ENCODE measurements at regions of chr14 and their contacts with region 1.

Region 1: GRCh38 chr14:70045844-70046535 is 142.8 kb downstream of the SLC8A3 start:
- DNase-seq: peak; percentile 73
- ATAC-seq: peak; percentile 91
- H3K4me3 ChIP-seq: peak overlapping the region in 2 of 3 experiments; percentile 15 to 61; a peak in 3 of 6 replicates
- H3K27ac ChIP-seq: peak overlapping the region; percentile 71
- H3K4me1 ChIP-seq: peaks cover 61% of the 10 kb centered on the region
- H3K27me3 ChIP-seq: no peaks in the 10 kb centered on the region
- CTCF ChIP-seq: peak; percentile 100
- EP300 ChIP-seq: no peak
- POLR2A ChIP-seq: no peak
- RAD21 ChIP-seq: peak; percentile 98

Region 2: DNA sequence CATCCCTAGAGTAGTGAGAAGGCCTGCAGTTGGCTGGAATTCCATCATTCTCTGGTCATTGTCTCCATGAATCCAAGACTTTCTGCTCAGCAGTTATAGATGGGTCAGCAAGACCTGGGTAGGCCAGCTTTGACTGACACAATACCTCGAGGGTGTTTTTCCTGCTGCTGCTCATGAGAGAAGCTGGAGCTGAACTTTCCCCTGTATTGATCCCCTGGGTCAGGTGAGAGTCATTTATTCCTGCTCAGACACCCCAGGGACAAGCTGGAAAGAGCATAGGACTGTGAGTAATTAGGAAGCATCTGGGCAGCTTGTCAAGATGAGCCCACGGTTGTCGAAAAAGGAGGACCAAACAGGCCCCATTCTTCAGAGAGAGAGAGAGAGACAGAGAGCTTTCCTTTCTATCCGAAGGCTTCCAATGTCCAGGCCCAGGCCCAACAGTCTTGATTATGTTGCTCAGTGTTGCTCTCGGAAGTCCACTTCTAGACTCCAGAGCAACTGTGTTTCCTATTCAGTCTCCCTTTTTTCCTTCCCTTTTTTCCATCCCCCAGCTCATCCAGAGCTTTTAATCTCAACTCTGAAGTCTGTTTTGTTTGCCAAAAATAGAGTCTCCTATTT is 11.6 kb after region 1 on chr14:
- CTCF ChIA-PET with region 1: no interaction called
- POLR2A ChIA-PET with region 1: interaction called, 12 read pairs
- in situ Hi-C with region 1: no loop called
- intact Hi-C with region 1: no loop called
- DNase-seq: no peak
- ATAC-seq: peak; percentile 88
- H3K4me3 ChIP-seq: no peak overlapping the region
- H3K27ac ChIP-seq: no peak overlapping the region
- H3K4me1 ChIP-seq: peaks cover 22% of the 10 kb centered on the region
- H3K27me3 ChIP-seq: peaks cover 0 to 5% of the 10 kb centered on the region in 2 experiments; a peak in 1 of 5 replicates
- CTCF ChIP-seq: no peak
- EP300 ChIP-seq: no peak
- POLR2A ChIP-seq: no peak
- RAD21 ChIP-seq: no peak

Region 3: DNA sequence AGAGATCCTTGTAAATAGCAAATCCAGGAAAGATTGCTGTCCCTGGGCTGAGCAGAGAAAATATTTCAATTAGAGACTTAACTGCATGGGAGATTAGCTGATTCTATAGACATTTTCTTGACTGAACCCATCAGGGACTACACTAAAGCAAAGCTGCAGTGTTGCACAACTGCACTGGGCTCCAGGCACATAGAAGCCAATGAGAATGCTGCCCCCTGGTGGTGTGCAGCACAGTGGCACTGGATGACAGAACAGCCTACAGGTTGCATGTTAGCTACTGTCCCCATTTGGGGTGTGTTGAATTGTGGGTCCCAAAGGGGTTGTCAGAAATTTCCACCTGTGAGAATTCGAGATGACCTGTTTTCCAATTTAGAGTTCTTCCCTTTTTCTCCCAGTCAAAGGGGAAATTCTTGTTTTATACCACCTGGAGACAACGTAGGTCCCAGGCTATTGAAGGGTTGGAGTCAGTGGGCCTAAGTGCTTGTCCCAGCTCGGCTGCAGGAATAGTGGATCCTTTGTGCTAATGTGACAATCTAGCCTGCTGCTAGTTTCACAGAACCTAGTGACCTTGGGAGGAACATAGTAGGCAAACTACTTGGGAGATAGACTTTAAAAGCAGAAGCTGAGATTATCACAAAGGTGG is 28.1 kb after region 1 on chr14:
- CTCF ChIA-PET with region 1: interaction called, 75 read pairs
- POLR2A ChIA-PET with region 1: interaction called, 44 read pairs
- in situ Hi-C with region 1: no loop called
- intact Hi-C with region 1: loop called (anchors 1 kb)
- DNase-seq: peak; percentile 87
- ATAC-seq: peak; percentile 100
- H3K4me3 ChIP-seq: no peak overlapping the region
- H3K27ac ChIP-seq: no peak overlapping the region
- H3K4me1 ChIP-seq: peaks cover 30% of the 10 kb centered on the region
- H3K27me3 ChIP-seq: no peaks in the 10 kb centered on the region
- CTCF ChIP-seq: peak; percentile 97
- EP300 ChIP-seq: no peak
- POLR2A ChIP-seq: no peak
- RAD21 ChIP-seq: peak; percentile 89

Region 4: GRCh38 chr14:70254476-70254961 is 208.5 kb after region 1 on chr14:
- CTCF ChIA-PET with region 1: no interaction called
- POLR2A ChIA-PET with region 1: interaction called, 16 read pairs
- in situ Hi-C with region 1: no loop called
- intact Hi-C with region 1: loop called (anchors 5 kb)
- DNase-seq: peak; percentile 43
- ATAC-seq: peak; percentile 96
- H3K4me3 ChIP-seq: peak overlapping the region; percentile 58 to 79 (median 66)
- H3K27ac ChIP-seq: peak overlapping the region; percentile 40
- H3K4me1 ChIP-seq: peaks cover 5% of the 10 kb centered on the region
- H3K27me3 ChIP-seq: no peaks in the 10 kb centered on the region; a peak in 2 of 5 replicates
- CTCF ChIP-seq: no peak
- EP300 ChIP-seq: no peak
- POLR2A ChIP-seq: peak in 1 of 2 experiments; percentile 46; a peak in 1 of 4 replicates
- RAD21 ChIP-seq: no peak